ENCODE measurements at regions of chr5 and their contacts with region 1.

Region 1: GRCh38 chr5:176537608-176538504 is 654 bp upstream of the RNF44 start:
- DNase-seq: peak; percentile 97
- H3K4me3 Mint-ChIP-seq: peak overlapping the region; percentile 96
- H3K27ac Mint-ChIP-seq: peak overlapping the region; percentile 97
- H3K4me1 Mint-ChIP-seq: peaks cover 72% of the 10 kb centered on the region
- H3K27me3 Mint-ChIP-seq: no peaks in the 10 kb centered on the region

Region 2: DNA sequence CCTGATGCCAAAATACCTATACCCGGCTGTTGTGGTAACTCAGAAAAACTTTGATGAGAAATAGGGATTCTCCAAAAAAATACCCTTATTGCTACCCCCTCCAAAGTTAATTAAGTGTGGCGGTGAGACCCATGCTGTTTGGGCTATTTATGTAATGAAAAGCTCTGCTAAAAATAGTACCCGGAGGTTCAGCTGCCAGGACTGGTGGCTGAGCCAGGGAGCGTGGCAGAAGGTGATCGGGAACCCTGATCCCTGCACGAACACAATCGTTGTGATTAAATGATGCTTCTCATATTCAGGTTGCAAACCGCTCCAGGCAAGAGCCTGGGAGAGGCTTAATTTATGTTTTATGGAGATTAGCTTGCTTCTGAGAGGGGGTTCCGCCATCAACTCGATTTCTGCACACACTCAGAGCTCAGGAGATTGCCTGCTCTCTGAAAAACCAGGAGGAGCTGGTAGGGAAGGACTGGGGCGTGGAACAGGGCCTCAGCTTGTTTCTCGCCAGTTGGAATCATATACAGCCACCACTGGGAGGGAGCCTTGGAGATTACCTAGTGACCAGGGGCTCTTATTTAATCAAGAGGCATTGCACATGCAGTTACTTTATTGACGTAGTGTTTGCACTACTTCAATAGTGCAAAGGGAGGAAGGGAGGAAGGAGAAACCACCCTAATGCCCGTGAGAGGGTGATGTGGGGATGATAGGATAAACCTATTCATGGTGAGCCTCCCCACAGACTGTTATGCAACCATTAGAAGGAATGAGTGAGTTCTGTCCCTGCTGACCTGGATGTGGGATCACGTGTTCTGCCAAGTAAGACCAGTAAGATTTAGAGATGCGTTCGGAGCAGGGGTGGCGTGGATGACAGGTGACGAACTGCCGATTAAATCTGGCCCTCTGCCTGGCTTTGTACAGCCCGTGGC is 856.5 kb before region 1 on chr5:
- intact Hi-C with region 1: no loop called
- DNase-seq: no peak
- H3K4me3 Mint-ChIP-seq: no peak overlapping the region
- H3K27ac Mint-ChIP-seq: no peak overlapping the region
- H3K4me1 Mint-ChIP-seq: peaks cover 57% of the 10 kb centered on the region
- H3K27me3 Mint-ChIP-seq: no peaks in the 10 kb centered on the region

Region 3: DNA sequence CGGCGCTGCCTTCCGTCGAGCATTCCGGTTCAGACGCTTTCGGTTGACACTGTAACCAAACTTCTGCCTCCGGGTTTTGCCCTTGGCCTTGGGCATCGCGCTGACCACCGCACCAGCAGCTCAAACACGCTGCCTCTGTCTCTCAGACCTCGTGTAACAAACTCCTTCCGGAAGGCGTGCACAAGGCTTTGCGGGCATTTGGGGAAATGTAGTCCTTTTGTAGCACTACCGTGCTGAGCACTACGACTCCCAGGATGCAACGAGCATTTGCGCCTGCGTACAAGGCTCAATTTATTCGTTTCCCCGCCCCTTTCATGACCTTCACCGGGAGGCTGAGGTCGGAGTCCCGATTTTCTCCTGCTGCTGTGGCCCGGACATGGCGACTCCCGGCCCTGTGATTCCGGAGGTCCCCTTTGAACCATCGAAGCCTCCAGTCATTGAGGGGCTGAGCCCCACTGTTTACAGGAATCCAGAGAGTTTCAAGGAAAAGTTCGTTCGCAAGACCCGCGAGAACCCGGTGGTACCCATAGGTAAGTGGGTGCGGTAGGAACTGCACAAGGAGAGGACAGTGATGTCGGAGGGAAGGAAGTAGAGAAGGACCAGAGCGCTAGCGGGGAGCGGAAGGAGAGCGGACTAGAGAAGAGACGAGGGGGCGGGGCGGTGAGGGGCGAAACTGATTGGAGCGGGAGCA is 149.3 kb before region 1 on chr5 and contains the starts of genes HIGD2A and NOP16:
- intact Hi-C with region 1: loop called (anchors 1 kb)
- DNase-seq: peak; percentile 96
- H3K4me3 Mint-ChIP-seq: peak within 1 kb of the TSS; percentile 100
- H3K27ac Mint-ChIP-seq: peak within 1 kb of the TSS; percentile 98
- H3K4me1 Mint-ChIP-seq: peaks cover 44% of the 10 kb centered on the region
- H3K27me3 Mint-ChIP-seq: no peaks in the 10 kb centered on the region
- total RNA-seq, gene HIGD2A: 93.2 and 93.5 TPM in 2 replicates
- total RNA-seq, gene NOP16: 111 TPM in 2 replicates

Region 4: DNA sequence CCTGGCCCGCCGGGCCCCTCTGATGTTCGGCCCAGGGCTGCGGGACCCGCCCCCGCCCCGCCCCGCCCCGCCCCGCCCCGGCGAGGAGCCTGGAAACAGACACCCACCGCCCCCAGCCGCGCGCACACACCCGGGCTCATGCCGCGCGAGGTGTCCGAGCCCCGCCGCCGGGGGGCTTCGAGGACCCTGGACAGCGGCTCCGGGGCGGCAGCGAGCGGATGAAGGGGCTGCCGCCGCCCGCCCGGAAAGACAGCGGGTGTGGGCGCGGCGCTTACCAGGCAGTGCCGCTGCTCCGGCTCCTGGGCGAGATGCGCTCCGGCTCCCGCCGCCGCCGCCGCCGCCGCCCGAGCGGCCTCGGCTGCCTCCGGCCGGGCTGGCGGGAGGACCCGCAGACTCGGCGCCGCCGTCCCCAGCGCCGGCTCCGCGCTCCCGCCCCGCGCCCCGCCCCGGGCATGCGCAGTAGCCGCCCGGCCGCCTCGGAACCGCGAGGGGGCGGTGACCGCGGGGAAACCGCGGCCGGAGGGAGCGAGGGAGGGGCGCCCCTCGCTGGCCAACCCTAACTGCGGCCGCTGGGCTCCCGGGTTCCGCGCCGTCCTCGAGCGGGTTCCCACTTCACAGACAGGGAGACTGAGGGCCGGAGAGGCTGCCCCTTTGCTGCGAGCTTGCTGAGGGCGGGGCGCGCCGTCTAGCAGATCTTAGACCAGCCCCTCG is 72.0 kb after region 1 on chr5 and contains the start of gene GPRIN1:
- intact Hi-C with region 1: loop called (anchors 1 kb)
- DNase-seq: peak; percentile 65
- H3K4me3 Mint-ChIP-seq: peak within 1 kb of the TSS; percentile 88
- H3K27ac Mint-ChIP-seq: peak within 1 kb of the TSS; percentile 76
- H3K4me1 Mint-ChIP-seq: peaks cover 20% of the 10 kb centered on the region
- H3K27me3 Mint-ChIP-seq: peaks cover 39% of the 10 kb centered on the region
- total RNA-seq, gene GPRIN1: 3.1 and 3.2 TPM in 2 replicates

Region 5: DNA sequence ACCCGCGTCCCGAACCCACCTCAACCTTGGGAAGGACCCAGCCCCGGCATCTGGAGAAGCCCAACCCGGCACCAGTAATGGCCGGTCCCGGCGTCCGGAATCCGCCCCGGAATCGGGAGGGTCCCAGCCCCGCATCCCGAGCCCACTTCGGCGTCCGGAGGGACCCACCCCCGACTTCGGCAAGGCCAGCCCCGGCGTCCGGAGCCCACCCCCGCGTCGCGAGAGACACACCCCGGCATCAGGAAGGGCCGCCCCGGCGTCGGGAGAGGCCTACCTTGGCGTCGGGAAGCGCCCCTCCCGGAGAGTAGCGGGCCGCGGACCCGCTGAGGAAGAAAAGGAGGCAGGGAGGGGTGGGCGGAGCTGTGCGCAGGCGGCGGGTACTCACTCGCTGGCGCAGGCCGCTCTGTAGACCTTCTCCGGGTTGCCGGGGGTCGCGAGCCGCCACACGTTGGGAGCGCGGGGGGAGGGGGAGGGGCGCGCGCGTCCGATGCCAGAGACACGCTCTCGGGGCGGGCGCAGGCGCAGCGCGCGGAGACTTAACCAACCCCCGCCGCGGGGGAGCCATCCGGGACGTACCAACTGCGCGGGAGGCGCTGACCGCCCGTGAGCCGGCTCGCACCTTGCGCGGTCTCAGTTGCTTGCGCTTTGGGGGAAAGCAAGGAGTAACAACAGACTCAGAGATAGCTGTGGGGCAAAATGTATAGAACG is 468.6 kb after region 1 on chr5 and contains the start of gene UIMC1:
- intact Hi-C with region 1: loop called (anchors 1 kb)
- DNase-seq: peak; percentile 91
- H3K4me3 Mint-ChIP-seq: peak within 1 kb of the TSS; percentile 96
- H3K27ac Mint-ChIP-seq: peak within 1 kb of the TSS; percentile 95
- H3K4me1 Mint-ChIP-seq: peaks cover 22% of the 10 kb centered on the region
- H3K27me3 Mint-ChIP-seq: no peaks in the 10 kb centered on the region
- total RNA-seq, gene UIMC1: 57.0 and 70.6 TPM in 2 replicates

Region 6: DNA sequence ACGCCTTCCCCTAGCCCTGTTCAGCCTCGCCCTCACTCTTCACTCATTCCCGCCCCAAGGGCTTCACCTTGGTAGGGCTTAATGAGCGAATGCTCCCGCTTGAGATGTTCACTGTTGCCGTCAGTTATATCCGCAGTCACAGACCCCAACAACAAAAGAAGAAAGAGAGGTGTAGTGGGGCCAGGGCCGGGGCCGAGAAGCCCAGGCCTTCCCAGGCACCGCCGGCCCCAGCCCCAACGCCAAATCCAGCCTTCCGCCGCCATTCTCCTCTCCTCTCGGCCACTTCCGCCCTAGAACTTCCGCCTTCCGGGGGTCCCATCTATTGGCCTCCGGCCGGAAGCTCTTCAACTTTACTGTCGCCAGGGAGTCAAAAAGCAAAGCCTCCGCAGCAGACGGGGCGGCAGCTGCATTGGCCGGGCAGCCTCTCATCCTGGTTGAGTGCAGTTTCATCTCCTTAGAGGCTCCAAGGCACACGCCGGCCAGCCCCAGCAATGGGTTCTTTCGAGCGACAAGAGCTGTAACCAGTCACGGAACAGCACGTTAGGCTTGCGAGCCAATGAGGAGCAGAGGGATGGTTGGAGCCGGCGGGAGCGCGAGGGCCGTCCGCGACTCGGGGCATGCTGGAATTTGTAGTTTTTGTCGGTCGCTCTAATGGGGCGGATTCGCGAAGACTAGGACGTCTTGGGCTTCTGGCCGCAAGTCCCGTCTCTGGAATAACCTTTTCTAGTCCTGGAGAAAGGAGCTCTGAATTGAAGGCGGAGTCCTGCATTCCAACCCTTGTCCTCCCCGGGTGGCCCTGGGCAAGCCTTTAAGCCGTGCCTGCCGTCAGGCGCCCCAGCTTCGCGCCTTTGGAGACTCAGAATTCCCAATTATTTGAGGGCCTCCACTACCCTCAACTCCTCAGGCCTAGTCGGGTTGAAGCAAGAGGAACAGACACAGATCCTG is 813.8 kb after region 1 on chr5 and contains the start of gene LMAN2:
- intact Hi-C with region 1: loop called (anchors 10 kb)
- DNase-seq: peak; percentile 90
- H3K4me3 Mint-ChIP-seq: peak within 1 kb of the TSS; percentile 98
- H3K27ac Mint-ChIP-seq: peak within 1 kb of the TSS; percentile 100
- H3K4me1 Mint-ChIP-seq: peaks cover 47% of the 10 kb centered on the region
- H3K27me3 Mint-ChIP-seq: no peaks in the 10 kb centered on the region
- total RNA-seq, gene LMAN2: 108 and 118 TPM in 2 replicates

Region 7: GRCh38 chr5:177592010-177592834 is 1054.4 kb after region 1 on chr5 and contains the start of gene TMED9:
- intact Hi-C with region 1: loop called (anchors 10 kb)
- DNase-seq: peak; percentile 90
- H3K4me3 Mint-ChIP-seq: peak within 1 kb of the TSS; percentile 99
- H3K27ac Mint-ChIP-seq: peak within 1 kb of the TSS; percentile 100
- H3K4me1 Mint-ChIP-seq: peaks cover 29% of the 10 kb centered on the region
- H3K27me3 Mint-ChIP-seq: peaks cover 20% of the 10 kb centered on the region
- total RNA-seq, gene TMED9: 174 and 175 TPM in 2 replicates